ENCODE measurements at regions of chr12 and their contacts with region 1.

Region 1: GRCh38 chr12:93796729-93797128 is 119.6 kb downstream of the CRADD start:
- DNase-seq: no peak
- ATAC-seq: no peak
- H3K4me3 ChIP-seq: no peak overlapping the region
- H3K27ac ChIP-seq: no peak overlapping the region
- H3K4me1 ChIP-seq: peaks cover 0 to 22% of the 10 kb centered on the region in 2 donors
- H3K27me3 ChIP-seq: no peaks in the 10 kb centered on the region
- CTCF ChIP-seq: no peak
- POLR2A ChIP-seq: no peak

Region 2: GRCh38 chr12:93839064-93839463 is 42.3 kb after region 1 on chr12:
- in situ Hi-C with region 1: no loop called
- intact Hi-C with region 1: loop called (anchors 1 kb)
- DNase-seq: no peak
- ATAC-seq: no peak
- H3K4me3 ChIP-seq: no peak overlapping the region
- H3K27ac ChIP-seq: no peak overlapping the region
- H3K4me1 ChIP-seq: peaks cover 11 to 33% of the 10 kb centered on the region in 2 donors
- H3K27me3 ChIP-seq: no peaks in the 10 kb centered on the region
- CTCF ChIP-seq: no peak
- POLR2A ChIP-seq: no peak

Measured in gastrocnemius medialis (tissue), 4 donors.